CD8-positive, alpha-beta T cell (primary cell): ENCODE measurements at regions of chr19 and their contacts with region 1.

Region 1: GRCh38 chr19:36850559-36851442 is at the start of gene ZNF345:
- DNase-seq: peak; percentile 66 to 94 (median 85)
- ATAC-seq: peak; percentile 81
- H3K4me3 ChIP-seq: peak within 1 kb of the TSS; percentile 83 to 92
- H3K4me3 Mint-ChIP-seq: no peak within 1 kb of the TSS
- H3K27ac ChIP-seq: peak within 1 kb of the TSS; percentile 74 to 94
- H3K27ac Mint-ChIP-seq: no peak within 1 kb of the TSS
- H3K4me1 ChIP-seq: peaks cover 14% of the 10 kb centered on the region
- H3K4me1 Mint-ChIP-seq: peaks cover 20% of the 10 kb centered on the region
- H3K27me3 ChIP-seq: peaks cover 0 to 2% of the 10 kb centered on the region in 2 experiments
- H3K27me3 Mint-ChIP-seq: no peaks in the 10 kb centered on the region
- CTCF ChIP-seq: no peak
- total RNA-seq, gene ZNF345: 7.8 to 8.0 TPM

Region 2: GRCh38 chr19:35740423-35741202 is 1110.2 kb before region 1 on chr19:
- CTCF ChIA-PET with region 1: no interaction called
- POLR2A ChIA-PET with region 1: no interaction called
- intact Hi-C with region 1: loop called in 1 of 2 experiments (anchors 10 kb)
- DNase-seq: peak; percentile 87 to 97 (median 95)
- ATAC-seq: peak; percentile 65
- H3K4me3 ChIP-seq: peak overlapping the region; percentile 60 to 63
- H3K4me3 Mint-ChIP-seq: peak overlapping the region; percentile 87
- H3K27ac ChIP-seq: peak overlapping the region; percentile 50 to 58
- H3K27ac Mint-ChIP-seq: peak overlapping the region; percentile 83
- H3K4me1 ChIP-seq: peaks cover 51% of the 10 kb centered on the region
- H3K4me1 Mint-ChIP-seq: peaks cover 53% of the 10 kb centered on the region
- H3K27me3 ChIP-seq: no peaks in the 10 kb centered on the region
- H3K27me3 Mint-ChIP-seq: no peaks in the 10 kb centered on the region
- CTCF ChIP-seq: no peak

Region 3: DNA sequence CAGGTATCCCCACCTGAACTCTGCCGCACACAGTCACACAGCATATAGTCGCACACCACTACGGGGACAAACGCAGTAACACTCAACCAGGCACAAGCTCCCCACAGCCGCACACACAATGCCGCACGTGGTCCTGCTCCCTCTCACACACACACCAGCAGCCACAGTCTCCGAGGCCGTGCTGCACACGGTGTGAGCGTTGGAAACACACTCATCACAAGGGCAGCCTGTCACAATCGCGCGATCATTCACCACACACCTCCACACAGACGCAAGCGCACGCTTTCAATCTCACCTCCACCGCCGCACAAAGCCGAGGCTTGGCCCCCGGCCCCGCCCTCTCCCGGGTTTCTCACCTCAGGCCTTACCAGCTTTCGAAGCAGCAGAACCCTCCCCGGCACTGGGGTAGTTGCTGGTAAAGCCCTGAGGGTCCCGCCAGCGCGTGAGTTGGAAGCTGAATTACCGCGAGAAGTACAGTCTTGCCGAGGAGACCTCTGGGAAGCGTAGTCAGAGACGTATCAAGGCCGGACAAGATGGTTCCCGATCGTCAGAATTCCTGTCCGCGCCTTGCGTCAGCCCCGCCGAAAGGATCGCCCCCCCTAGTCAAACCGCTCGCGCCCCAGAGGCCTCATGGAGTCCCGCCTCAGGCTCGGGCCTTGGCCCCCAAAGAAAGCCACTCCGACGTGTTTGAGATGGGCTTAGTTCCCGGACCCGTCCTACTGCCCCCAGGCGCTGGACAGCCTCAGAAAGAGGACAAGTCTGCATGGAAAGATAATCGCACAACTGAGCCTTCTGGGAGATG is 361.5 kb before region 1 on chr19 and contains the start of gene ZNF566:
- CTCF ChIA-PET with region 1: no interaction called
- POLR2A ChIA-PET with region 1: interaction called, 9 read pairs
- intact Hi-C with region 1: loop called (anchors 1 kb)
- DNase-seq: peak; percentile 84 to 98 (median 91)
- ATAC-seq: peak; percentile 88
- H3K4me3 ChIP-seq: peak within 1 kb of the TSS; percentile 84 to 93
- H3K4me3 Mint-ChIP-seq: peak within 1 kb of the TSS; percentile 99
- H3K27ac ChIP-seq: peak within 1 kb of the TSS; percentile 79 to 96
- H3K27ac Mint-ChIP-seq: peak within 1 kb of the TSS; percentile 96
- H3K4me1 ChIP-seq: peaks cover 6% of the 10 kb centered on the region
- H3K4me1 Mint-ChIP-seq: peaks cover 33% of the 10 kb centered on the region
- H3K27me3 ChIP-seq: no peaks in the 10 kb centered on the region
- H3K27me3 Mint-ChIP-seq: no peaks in the 10 kb centered on the region
- CTCF ChIP-seq: no peak
- total RNA-seq, gene ZNF566: 5.8 to 7.0 TPM

Region 4: GRCh38 chr19:36687214-36688056 is 163.4 kb before region 1 on chr19 and contains the start of gene ZNF567:
- CTCF ChIA-PET with region 1: no interaction called
- POLR2A ChIA-PET with region 1: no interaction called
- intact Hi-C with region 1: loop called (anchors 1 to 5 kb)
- DNase-seq: peak; percentile 91 to 99 (median 98)
- ATAC-seq: peak; percentile 91
- H3K4me3 ChIP-seq: peak within 1 kb of the TSS; percentile 82 to 87
- H3K4me3 Mint-ChIP-seq: peak within 1 kb of the TSS; percentile 99
- H3K27ac ChIP-seq: peak within 1 kb of the TSS; percentile 71 to 81
- H3K27ac Mint-ChIP-seq: peak within 1 kb of the TSS; percentile 96
- H3K4me1 ChIP-seq: peaks cover 18% of the 10 kb centered on the region
- H3K4me1 Mint-ChIP-seq: peaks cover 35% of the 10 kb centered on the region
- H3K27me3 ChIP-seq: no peaks in the 10 kb centered on the region
- H3K27me3 Mint-ChIP-seq: no peaks in the 10 kb centered on the region
- CTCF ChIP-seq: no peak
- total RNA-seq, gene ZNF567: 10.7 to 11.1 TPM

Region 5: GRCh38 chr19:36915992-36916830 is 65.4 kb after region 1 on chr19 and contains the starts of genes ZNF568 and ZNF829:
- CTCF ChIA-PET with region 1: no interaction called
- POLR2A ChIA-PET with region 1: interaction called, 4 read pairs
- intact Hi-C with region 1: loop called (anchors 1 kb)
- DNase-seq: peak; percentile 82 to 97 (median 92)
- ATAC-seq: peak; percentile 97
- H3K4me3 ChIP-seq: peak within 1 kb of the TSS; percentile 75 to 79
- H3K4me3 Mint-ChIP-seq: peak within 1 kb of the TSS; percentile 89
- H3K27ac ChIP-seq: peak within 1 kb of the TSS; percentile 80 to 95
- H3K27ac Mint-ChIP-seq: peak within 1 kb of the TSS; percentile 95
- H3K4me1 ChIP-seq: peaks cover 10% of the 10 kb centered on the region
- H3K4me1 Mint-ChIP-seq: peaks cover 36% of the 10 kb centered on the region
- H3K27me3 ChIP-seq: no peaks in the 10 kb centered on the region
- H3K27me3 Mint-ChIP-seq: no peaks in the 10 kb centered on the region
- CTCF ChIP-seq: peak; percentile 91
- total RNA-seq, gene ZNF568: 4.6 to 5.5 TPM
- total RNA-seq, gene ZNF829: 6.1 to 6.2 TPM

Region 6: GRCh38 chr19:37172368-37173366 is 321.9 kb after region 1 on chr19 and contains the start of gene ZNF585A:
- CTCF ChIA-PET with region 1: no interaction called
- POLR2A ChIA-PET with region 1: no interaction called
- intact Hi-C with region 1: loop called in 1 of 2 experiments (anchors 1 kb)
- DNase-seq: peak; percentile 83 to 98 (median 90)
- ATAC-seq: peak; percentile 99
- H3K4me3 ChIP-seq: peak within 1 kb of the TSS; percentile 85 to 91
- H3K4me3 Mint-ChIP-seq: no peak within 1 kb of the TSS
- H3K27ac ChIP-seq: peak within 1 kb of the TSS; percentile 74 to 89
- H3K27ac Mint-ChIP-seq: no peak within 1 kb of the TSS
- H3K4me1 ChIP-seq: no peaks in the 10 kb centered on the region
- H3K4me1 Mint-ChIP-seq: peaks cover 6% of the 10 kb centered on the region
- H3K27me3 ChIP-seq: no peaks in the 10 kb centered on the region
- H3K27me3 Mint-ChIP-seq: no peaks in the 10 kb centered on the region
- CTCF ChIP-seq: no peak
- total RNA-seq, gene ZNF585A: 5.3 TPM